ENCODE measurements at regions of chr3 and their contacts with region 1.

Region 1: DNA sequence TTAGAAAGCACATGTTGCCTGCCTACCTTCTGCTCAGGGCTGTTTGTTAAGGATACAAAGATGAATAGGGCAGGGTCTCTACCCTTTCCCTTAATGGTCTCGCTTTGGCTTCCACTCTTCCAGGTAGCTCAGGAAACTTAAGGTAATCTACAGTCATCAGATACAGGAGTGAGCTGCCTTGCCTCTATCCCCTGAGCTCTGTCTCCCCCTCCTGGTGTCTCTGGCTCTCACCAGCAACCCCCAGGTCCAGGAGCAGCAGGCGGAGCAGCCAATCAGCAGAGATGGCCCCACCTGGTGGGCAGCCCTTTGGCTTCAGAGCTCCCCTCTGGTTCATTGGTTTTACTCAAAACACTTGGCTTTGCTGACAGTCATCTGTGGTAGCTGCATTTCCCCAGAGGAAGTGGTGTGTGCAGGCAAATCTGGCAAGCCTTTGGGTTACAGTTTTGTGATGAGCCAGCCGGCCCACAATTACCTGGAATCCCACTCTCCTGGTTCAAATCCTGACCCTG is 8.5 kb upstream of the CX3CR1 start:
- DNase-seq: peak; percentile 90 to 97 (median 94)
- ATAC-seq: peak; percentile 96
- H3K4me3 ChIP-seq: no peak overlapping the region
- H3K27ac ChIP-seq: no peak overlapping the region
- H3K4me1 ChIP-seq: peaks cover 3 to 21% of the 10 kb centered on the region in 2 experiments; a peak in 3 of 5 replicates
- H3K27me3 ChIP-seq: peaks cover 0 to 4% of the 10 kb centered on the region in 2 experiments; a peak in 1 of 5 replicates
- CTCF ChIP-seq: peak; percentile 99 to 100 (median 99)
- EP300 ChIP-seq: peak; percentile 29; the same call in 1 of the 2 replicates
- POLR2A ChIP-seq: no peak
- RAD21 ChIP-seq: peak; percentile 100

Region 2: DNA sequence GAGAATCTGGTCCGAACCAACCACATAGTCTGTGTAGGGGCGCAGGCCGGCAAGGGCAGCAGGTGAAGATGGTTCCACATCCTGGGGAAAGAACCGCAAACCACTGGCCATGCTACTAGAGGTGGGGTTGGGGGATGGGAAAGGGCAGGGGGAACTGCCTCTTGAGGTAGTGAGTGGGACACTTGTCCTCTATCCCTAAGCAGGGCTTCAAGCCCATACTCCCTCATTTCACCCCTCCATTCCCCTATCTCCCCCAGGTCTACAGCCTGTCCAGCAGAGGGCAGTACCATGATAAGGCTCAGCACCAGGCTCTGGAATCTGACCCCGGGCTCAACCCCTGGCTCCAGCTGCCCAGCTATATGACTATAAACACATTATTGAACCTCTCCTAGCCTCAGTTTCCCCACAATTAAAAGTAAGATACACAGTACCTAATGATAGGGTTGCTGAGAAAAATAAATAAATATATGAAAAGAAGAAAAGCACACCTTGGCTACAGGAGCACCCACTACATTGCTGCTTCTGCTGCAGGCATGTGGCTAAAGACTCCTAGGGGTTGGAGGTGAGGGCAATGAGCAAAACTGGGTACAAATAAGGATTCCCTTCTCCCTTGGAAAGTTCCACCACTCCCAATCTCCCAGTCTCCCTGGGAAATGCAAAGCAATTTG is 187.2 kb before region 1 on chr3:
- CTCF ChIA-PET with region 1: interaction called, 6 read pairs
- POLR2A ChIA-PET with region 1: no interaction called
- in situ Hi-C with region 1: no loop called
- intact Hi-C with region 1: loop called (anchors 2 kb)
- DNase-seq: peak; percentile 70 to 85 (median 84)
- ATAC-seq: peak; percentile 83
- H3K4me3 ChIP-seq: no peak overlapping the region
- H3K27ac ChIP-seq: no peak overlapping the region
- H3K4me1 ChIP-seq: peaks cover 10 to 23% of the 10 kb centered on the region in 2 experiments; a peak in 4 of 5 replicates
- H3K27me3 ChIP-seq: no peaks in the 10 kb centered on the region
- CTCF ChIP-seq: peak; percentile 77 to 86 (median 78)
- EP300 ChIP-seq: no peak
- POLR2A ChIP-seq: no peak
- RAD21 ChIP-seq: peak; percentile 49 to 66

Region 3: GRCh38 chr3:39146984-39147591 is 141.3 kb before region 1 on chr3:
- CTCF ChIA-PET with region 1: no interaction called
- POLR2A ChIA-PET with region 1: interaction called, 5 read pairs
- in situ Hi-C with region 1: no loop called
- intact Hi-C with region 1: loop called (anchors 1 kb)
- DNase-seq: peak in 2 of 4 experiments; percentile 56 to 84
- ATAC-seq: peak; percentile 33
- H3K4me3 ChIP-seq: no peak overlapping the region; the same call in 1 of the 2 replicates
- H3K27ac ChIP-seq: peak overlapping the region; percentile 35
- H3K4me1 ChIP-seq: peaks cover 54 to 56% of the 10 kb centered on the region in 2 experiments
- H3K27me3 ChIP-seq: no peaks in the 10 kb centered on the region; a peak in 1 of 5 replicates
- CTCF ChIP-seq: no peak
- EP300 ChIP-seq: no peak
- POLR2A ChIP-seq: no peak; the same call in 1 of the 2 replicates
- RAD21 ChIP-seq: no peak

Region 4: GRCh38 chr3:39189959-39190269 is 98.4 kb before region 1 on chr3:
- CTCF ChIA-PET with region 1: interaction called, 63 read pairs
- POLR2A ChIA-PET with region 1: interaction called, 17 read pairs
- in situ Hi-C with region 1: loop called (anchors 5 kb)
- intact Hi-C with region 1: loop called (anchors 1 kb)
- DNase-seq: peak; percentile 79 to 86 (median 80)
- ATAC-seq: peak; percentile 85
- H3K4me3 ChIP-seq: no peak overlapping the region
- H3K27ac ChIP-seq: no peak overlapping the region
- H3K4me1 ChIP-seq: peaks cover 0 to 26% of the 10 kb centered on the region in 2 experiments; a peak in 2 of 5 replicates
- H3K27me3 ChIP-seq: peaks cover 11 to 23% of the 10 kb centered on the region in 2 experiments; a peak in 4 of 5 replicates
- CTCF ChIP-seq: peak; percentile 89 to 94 (median 91)
- EP300 ChIP-seq: peak; percentile 43
- POLR2A ChIP-seq: no peak
- RAD21 ChIP-seq: peak; percentile 99 to 100

Region 5: DNA sequence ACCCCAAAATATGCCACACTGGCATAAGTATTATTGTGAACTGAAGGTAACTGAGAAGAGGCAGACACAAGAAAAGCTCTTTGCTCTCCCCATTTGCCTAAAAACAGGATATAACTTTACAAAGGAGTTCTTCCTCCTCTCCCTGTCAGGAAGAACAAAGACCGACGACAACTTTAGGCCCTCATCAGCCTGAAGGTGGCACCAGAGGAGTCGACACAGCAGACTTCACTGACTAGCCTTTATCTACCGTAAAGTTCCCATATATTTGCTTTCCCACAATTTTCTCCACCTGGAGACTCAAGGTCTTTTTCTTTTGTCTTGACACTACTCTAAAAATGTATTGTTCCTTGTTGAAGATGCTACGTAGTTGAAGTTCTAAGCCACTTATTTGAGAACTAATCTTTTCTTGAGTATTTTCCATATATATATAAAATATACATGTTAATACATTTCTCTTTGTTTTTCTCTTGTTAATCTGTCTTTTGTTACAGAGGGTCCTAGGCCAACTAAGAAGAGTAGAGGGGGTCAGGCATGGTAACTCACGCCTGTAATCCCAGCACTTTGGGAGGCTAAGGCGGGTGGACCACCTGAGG is 79.8 kb before region 1 on chr3:
- CTCF ChIA-PET with region 1: interaction called, 8 read pairs
- POLR2A ChIA-PET with region 1: no interaction called
- in situ Hi-C with region 1: no loop called
- intact Hi-C with region 1: loop called (anchors 1 kb)
- DNase-seq: peak; percentile 64 to 76 (median 70)
- ATAC-seq: peak; percentile 95
- H3K4me3 ChIP-seq: no peak overlapping the region
- H3K27ac ChIP-seq: no peak overlapping the region
- H3K4me1 ChIP-seq: no peaks in the 10 kb centered on the region
- H3K27me3 ChIP-seq: peaks cover 34 to 37% of the 10 kb centered on the region in 2 experiments
- CTCF ChIP-seq: peak; percentile 71 to 88 (median 81)
- EP300 ChIP-seq: no peak
- POLR2A ChIP-seq: no peak
- RAD21 ChIP-seq: peak; percentile 85 to 88

Region 6: DNA sequence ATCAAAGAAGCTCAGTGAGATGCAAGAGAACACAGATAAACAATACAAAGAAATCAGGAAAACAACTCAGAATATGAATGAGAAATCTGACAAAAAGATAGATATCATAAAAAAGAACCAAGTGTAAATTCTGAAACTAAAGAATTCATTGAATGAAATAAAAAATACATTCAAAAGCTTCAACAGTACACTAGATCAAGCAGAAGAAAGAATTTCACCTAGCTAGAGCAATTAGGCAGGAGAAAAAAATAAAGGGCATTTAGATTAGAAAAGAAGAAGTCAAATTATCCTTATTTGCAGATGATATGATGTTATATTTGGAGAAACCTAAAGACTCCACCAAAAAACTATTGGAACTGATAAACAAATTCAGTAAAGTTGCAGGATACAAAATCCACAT is 10.9 kb after region 1 on chr3:
- CTCF ChIA-PET with region 1: no interaction called
- POLR2A ChIA-PET with region 1: no interaction called
- in situ Hi-C with region 1: no loop called
- intact Hi-C with region 1: no loop called
- DNase-seq: no peak
- ATAC-seq: no peak
- H3K4me3 ChIP-seq: no peak overlapping the region
- H3K27ac ChIP-seq: no peak overlapping the region
- H3K4me1 ChIP-seq: no peaks in the 10 kb centered on the region
- H3K27me3 ChIP-seq: peaks cover 0 to 8% of the 10 kb centered on the region in 2 experiments; a peak in 2 of 5 replicates
- CTCF ChIP-seq: no peak
- EP300 ChIP-seq: no peak
- POLR2A ChIP-seq: no peak
- RAD21 ChIP-seq: peak in 1 of 2 experiments; percentile 19; a peak in 1 of 4 replicates

Region 7: DNA sequence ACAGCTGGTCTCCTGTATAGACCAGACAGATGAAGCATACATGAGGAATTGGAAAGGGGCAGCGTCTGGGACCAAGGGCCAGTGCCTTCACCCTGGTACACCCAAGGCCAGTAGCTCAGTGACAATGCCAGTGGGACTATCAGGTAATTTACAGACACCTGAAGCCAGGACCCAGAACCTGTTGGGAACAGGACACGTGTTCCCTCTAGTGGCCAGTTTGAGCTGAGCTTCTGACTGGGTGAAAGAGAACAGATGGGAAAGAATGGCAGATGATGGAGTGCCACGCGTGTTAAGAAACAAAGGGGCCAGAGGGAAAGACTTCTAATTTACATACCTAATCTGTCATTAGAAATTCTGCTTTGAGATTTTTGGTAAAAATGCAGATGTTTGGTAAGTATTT is 89.7 kb after region 1 on chr3:
- CTCF ChIA-PET with region 1: interaction called, 3 read pairs
- POLR2A ChIA-PET with region 1: interaction called, 3 read pairs
- in situ Hi-C with region 1: no loop called
- intact Hi-C with region 1: loop called (anchors 1 kb)
- DNase-seq: peak; percentile 59 to 80 (median 66)
- ATAC-seq: peak; percentile 88
- H3K4me3 ChIP-seq: no peak overlapping the region
- H3K27ac ChIP-seq: no peak overlapping the region
- H3K4me1 ChIP-seq: peaks cover 0 to 4% of the 10 kb centered on the region in 2 experiments; a peak in 3 of 5 replicates
- H3K27me3 ChIP-seq: peaks cover 33 to 38% of the 10 kb centered on the region in 2 experiments
- CTCF ChIP-seq: peak; percentile 79 to 93 (median 87)
- EP300 ChIP-seq: no peak
- POLR2A ChIP-seq: no peak
- RAD21 ChIP-seq: peak; percentile 84 to 92